Ascending aorta (tissue), 2 donors: ENCODE measurements at regions of chr19 and their contacts with region 1.

Region 1: GRCh38 chr19:48965040-48965805 is at the start of gene FTL:
- DNase-seq: peak; percentile 94 to 98
- H3K4me3 ChIP-seq: peak within 1 kb of the TSS; percentile 89 to 94
- H3K27ac ChIP-seq: peak within 1 kb of the TSS; percentile 89 to 96
- H3K4me1 ChIP-seq: peaks cover 9 to 37% of the 10 kb centered on the region in 2 donors
- H3K27me3 ChIP-seq: no peaks in the 10 kb centered on the region
- CTCF ChIP-seq: no peak
- total RNA-seq, gene FTL: 7,736 TPM

Region 2: GRCh38 chr19:48795055-48795684 is 170.1 kb before region 1 on chr19:
- intact Hi-C with region 1: loop called (anchors 2 kb)
- DNase-seq: peak; percentile 84 to 96
- H3K4me3 ChIP-seq: peak overlapping the region; percentile 14 to 61
- H3K27ac ChIP-seq: peak overlapping the region; percentile 80 to 92
- H3K4me1 ChIP-seq: peaks cover 4 to 8% of the 10 kb centered on the region in 2 donors
- H3K27me3 ChIP-seq: no peaks in the 10 kb centered on the region
- CTCF ChIP-seq: peak; percentile 93 to 99 (median 97)

Region 3: GRCh38 chr19:48835734-48836088 is 129.5 kb before region 1 on chr19:
- intact Hi-C with region 1: loop called (anchors 2 kb)
- DNase-seq: peak; percentile 89 to 98
- H3K4me3 ChIP-seq: peak overlapping the region; percentile 59 to 67
- H3K27ac ChIP-seq: peak overlapping the region; percentile 88 to 94
- H3K4me1 ChIP-seq: peaks cover 3 to 8% of the 10 kb centered on the region in 2 donors
- H3K27me3 ChIP-seq: no peaks in the 10 kb centered on the region
- CTCF ChIP-seq: peak; percentile 82 to 96 (median 85)

Region 4: GRCh38 chr19:48872182-48872883 is 92.9 kb before region 1 on chr19 and contains the start of gene PPP1R15A:
- intact Hi-C with region 1: loop called (anchors 1 kb)
- DNase-seq: peak; percentile 96 to 99
- H3K4me3 ChIP-seq: peak within 1 kb of the TSS; percentile 91 to 99
- H3K27ac ChIP-seq: peak within 1 kb of the TSS; percentile 100
- H3K4me1 ChIP-seq: peaks cover 10 to 31% of the 10 kb centered on the region in 2 donors
- H3K27me3 ChIP-seq: no peaks in the 10 kb centered on the region
- CTCF ChIP-seq: peak in 2 of 3 experiments; percentile 10 to 40
- total RNA-seq, gene PPP1R15A: 142 TPM

Region 5: DNA sequence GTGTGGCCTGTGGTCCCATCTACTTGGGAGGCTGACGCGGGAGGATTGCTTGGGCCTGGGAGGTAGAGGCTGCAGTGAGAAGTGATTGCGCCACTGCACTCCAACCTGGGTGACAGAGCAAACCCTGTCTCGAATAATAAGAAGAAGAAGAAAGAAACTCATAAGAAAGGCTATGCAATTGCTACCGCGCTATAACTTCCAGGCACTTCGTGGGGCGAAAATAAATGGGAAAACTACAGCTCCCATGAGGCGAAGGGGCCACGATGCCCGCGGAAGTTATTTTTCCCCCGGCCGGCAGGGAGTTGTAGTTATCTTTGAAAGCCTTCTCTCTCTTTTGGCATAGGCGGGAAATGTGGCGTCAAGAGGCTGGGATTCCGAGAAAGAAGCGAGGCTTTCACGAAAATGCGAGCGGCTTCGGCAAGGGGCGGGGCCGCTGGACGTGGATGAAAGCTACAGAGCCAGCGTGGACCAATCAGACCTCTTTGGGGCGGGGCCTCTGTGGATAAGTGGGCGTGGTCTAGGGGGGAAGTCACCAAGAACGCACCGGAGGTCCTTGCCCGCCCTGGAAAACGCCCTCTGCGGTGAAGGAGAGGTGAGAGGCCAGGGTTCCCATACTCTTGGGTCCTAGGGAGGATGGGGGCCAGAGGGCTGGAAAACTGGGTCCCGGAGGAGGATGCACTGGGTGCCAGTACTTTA is 65.3 kb before region 1 on chr19 and contains the start of gene NUCB1:
- intact Hi-C with region 1: loop called (anchors 1 kb)
- DNase-seq: peak; percentile 98 to 100
- H3K4me3 ChIP-seq: peak within 1 kb of the TSS; percentile 75 to 91
- H3K27ac ChIP-seq: peak within 1 kb of the TSS; percentile 94 to 96
- H3K4me1 ChIP-seq: peaks cover 6 to 28% of the 10 kb centered on the region in 2 donors
- H3K27me3 ChIP-seq: no peaks in the 10 kb centered on the region
- CTCF ChIP-seq: peak; percentile 14 to 50 (median 31)
- total RNA-seq, gene NUCB1: 505 TPM

Region 6: GRCh38 chr19:48926909-48927308 is 38.3 kb before region 1 on chr19:
- intact Hi-C with region 1: no loop called
- DNase-seq: peak; percentile 80 to 88
- H3K4me3 ChIP-seq: no peak overlapping the region
- H3K27ac ChIP-seq: peak overlapping the region; percentile 74 to 78
- H3K4me1 ChIP-seq: peaks cover 0 to 3% of the 10 kb centered on the region in 2 donors
- H3K27me3 ChIP-seq: no peaks in the 10 kb centered on the region
- CTCF ChIP-seq: no peak

Region 7: GRCh38 chr19:48954595-48955310 is 10.5 kb before region 1 on chr19 and contains the start of gene BAX:
- intact Hi-C with region 1: loop called (anchors 2 kb)
- DNase-seq: peak; percentile 92 to 99
- H3K4me3 ChIP-seq: peak within 1 kb of the TSS; percentile 88 to 95
- H3K27ac ChIP-seq: peak within 1 kb of the TSS; percentile 86 to 94
- H3K4me1 ChIP-seq: peaks cover 5 to 13% of the 10 kb centered on the region in 2 donors
- H3K27me3 ChIP-seq: no peaks in the 10 kb centered on the region
- CTCF ChIP-seq: no peak
- total RNA-seq, gene BAX: 182 TPM

Region 8: GRCh38 chr19:48993175-48994034 is 28.2 kb after region 1 on chr19 and contains the starts of genes GYS1 and RUVBL2:
- intact Hi-C with region 1: loop called (anchors 2 kb)
- DNase-seq: peak; percentile 99 to 100
- H3K4me3 ChIP-seq: peak within 1 kb of the TSS; percentile 58 to 81
- H3K27ac ChIP-seq: peak within 1 kb of the TSS; percentile 94
- H3K4me1 ChIP-seq: peaks cover 21 to 26% of the 10 kb centered on the region in 2 donors
- H3K27me3 ChIP-seq: no peaks in the 10 kb centered on the region
- CTCF ChIP-seq: peak; percentile 98 to 100 (median 99)
- total RNA-seq, gene GYS1: 21.8 TPM
- total RNA-seq, gene RUVBL2: 106 TPM